ENCODE measurements at regions of chr6 and their contacts with region 1.

Region 1: GRCh38 chr6:134607411-134607810 is 289.5 kb upstream of the SGK1 start:
- DNase-seq: no peak

Region 2: DNA sequence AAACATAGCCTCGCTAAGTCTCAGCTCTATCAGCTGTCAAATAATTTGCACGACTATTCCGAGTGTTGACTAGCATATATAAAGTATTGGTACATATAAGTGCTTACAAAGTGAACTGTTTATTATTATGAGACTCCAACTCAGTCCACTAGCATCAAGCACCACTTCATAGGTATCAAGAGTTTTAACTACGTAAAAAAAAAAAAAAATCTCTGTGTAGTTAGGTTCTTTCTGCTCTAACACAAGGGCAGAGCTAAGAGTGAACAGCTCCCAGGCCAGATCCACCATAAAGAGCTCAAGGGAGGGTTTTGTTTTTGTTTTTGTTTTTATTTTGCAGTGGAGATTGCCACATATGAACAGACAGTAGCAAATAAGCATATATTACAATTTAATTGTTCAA is 20.3 kb after region 1 on chr6:
- intact Hi-C with region 1: loop called in 1 of 2 experiments (anchors 1 kb)
- DNase-seq: no peak

Region 3: DNA sequence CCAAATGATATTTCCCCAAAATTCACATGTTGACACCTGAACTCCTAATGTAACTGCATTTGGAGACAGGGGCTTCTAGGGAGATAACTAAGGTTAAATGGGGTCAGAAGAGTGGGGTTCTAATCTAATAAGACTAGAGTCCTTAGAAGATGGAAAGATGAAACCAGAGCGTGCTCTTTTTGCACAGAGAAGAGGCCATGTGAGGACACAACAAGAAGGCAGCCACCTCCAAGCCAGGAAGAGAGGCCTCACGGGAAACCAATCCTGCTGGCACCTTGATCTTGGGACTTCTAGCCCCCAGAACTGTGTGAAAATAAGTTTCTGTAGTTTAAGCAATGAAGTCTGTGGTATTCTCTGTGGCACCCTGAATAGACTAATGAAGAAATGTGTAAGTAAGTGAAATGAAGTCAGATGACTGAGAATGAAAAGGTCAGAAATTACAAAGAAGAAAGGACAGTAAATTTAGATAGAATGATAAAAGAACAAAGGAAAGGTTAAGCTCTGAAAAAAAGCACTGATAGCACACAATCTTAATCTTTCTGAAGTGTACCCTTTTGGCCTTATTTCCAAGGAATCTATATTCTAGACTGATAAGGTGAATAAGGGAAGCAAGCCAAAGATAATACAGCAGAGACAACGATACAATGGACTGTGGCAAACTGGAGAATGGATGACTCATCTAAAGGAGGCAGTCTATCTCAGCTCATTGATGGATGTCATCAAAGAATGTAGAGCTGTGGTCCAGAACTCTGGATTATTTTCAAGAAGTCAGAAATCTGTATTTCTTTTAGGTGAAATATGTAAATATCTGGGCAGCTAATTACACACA is 684.1 kb after region 1 on chr6:
- intact Hi-C with region 1: no loop called
- DNase-seq: no peak